WTC11 (cell line): ENCODE measurements at regions of chr2 and their contacts with region 1.

Region 1: DNA sequence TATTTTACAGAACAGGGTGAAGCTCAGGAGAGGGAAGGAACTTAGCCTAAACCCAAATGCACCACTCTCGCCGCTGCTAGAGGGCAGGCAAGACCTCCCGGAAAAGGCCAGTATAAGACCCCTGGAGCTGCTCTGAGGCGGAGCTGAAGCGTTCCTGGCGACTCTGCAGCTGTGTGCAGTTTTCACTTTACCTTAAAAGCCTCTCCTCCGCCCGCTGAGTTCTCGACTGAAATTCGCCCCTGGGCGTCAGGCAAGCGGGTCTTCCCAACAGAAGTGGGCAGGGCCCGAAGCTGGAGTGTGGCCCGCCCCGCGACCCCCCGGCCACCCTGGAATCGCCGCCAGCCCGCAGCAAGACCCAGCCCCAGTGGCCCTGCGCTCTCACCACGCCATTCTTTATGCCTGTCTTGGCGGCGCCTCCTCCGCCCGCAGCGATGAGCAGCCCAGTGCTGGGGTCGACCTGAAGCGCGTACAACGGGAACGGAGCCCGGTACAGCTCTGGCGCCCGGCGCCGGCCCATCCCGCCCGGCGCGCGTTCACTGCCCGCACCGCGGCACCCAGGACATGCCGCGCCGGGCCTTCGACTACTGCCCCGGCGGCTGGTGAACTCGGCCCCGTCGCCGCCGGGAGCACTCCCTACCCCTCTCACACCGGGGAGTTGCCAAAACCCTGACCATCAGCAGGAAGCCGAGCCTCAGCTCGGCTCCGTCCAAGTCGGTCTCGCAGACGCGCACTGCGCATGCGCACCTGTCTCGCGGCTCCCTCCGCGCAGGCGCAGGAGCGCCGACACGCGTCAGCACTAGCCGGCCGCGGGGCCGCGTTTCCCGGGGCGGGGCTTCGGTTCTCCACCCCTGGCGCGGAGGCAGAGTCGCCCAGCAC is at the start of gene PREB:
- DNase-seq: peak; percentile 99
- ATAC-seq: peak; percentile 93
- H3K4me3 Mint-ChIP-seq: peak within 1 kb of the TSS; percentile 90
- H3K27ac Mint-ChIP-seq: peak within 1 kb of the TSS; percentile 98
- H3K4me1 Mint-ChIP-seq: peaks cover 14% of the 10 kb centered on the region
- H3K27me3 Mint-ChIP-seq: peaks cover 5% of the 10 kb centered on the region
- CTCF ChIP-seq: no peak
- total RNA-seq, gene PREB: 56.7 to 69.2 TPM (median 56.7 TPM) in 3 replicates

Region 2: DNA sequence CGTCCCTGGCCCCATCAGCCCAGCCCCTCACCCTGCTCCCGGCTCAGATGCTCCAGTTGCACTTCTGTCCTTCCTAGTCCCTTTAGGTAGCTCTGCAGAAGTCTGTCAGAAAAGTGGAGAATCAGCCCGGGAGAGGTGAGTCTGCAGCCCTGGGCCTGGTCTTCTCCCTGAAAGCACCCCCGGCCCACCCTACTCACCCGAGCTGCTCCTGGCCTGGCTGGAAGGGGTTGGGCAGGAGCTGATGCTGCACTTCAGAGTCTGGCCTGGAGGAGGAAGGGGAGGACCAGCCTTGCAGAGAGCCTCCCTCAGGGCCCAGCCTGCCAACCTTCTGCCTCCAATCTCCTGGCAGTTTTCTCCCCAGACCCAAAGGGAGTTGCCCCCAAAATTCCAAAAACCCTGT is 31.8 kb before region 1 on chr2:
- CTCF ChIA-PET with region 1: interaction called, 19 read pairs
- POLR2A ChIA-PET with region 1: interaction called, 3 read pairs
- DNase-seq: no peak
- ATAC-seq: no peak; the same call in 1 of the 2 replicates
- H3K4me3 Mint-ChIP-seq: no peak overlapping the region
- H3K27ac Mint-ChIP-seq: no peak overlapping the region
- H3K4me1 Mint-ChIP-seq: no peaks in the 10 kb centered on the region
- H3K27me3 Mint-ChIP-seq: 0 out of 2 replicates have a peak, but pooled peaks cover 5% of the 10 kb centered on the region
- CTCF ChIP-seq: no peak

Region 3: DNA sequence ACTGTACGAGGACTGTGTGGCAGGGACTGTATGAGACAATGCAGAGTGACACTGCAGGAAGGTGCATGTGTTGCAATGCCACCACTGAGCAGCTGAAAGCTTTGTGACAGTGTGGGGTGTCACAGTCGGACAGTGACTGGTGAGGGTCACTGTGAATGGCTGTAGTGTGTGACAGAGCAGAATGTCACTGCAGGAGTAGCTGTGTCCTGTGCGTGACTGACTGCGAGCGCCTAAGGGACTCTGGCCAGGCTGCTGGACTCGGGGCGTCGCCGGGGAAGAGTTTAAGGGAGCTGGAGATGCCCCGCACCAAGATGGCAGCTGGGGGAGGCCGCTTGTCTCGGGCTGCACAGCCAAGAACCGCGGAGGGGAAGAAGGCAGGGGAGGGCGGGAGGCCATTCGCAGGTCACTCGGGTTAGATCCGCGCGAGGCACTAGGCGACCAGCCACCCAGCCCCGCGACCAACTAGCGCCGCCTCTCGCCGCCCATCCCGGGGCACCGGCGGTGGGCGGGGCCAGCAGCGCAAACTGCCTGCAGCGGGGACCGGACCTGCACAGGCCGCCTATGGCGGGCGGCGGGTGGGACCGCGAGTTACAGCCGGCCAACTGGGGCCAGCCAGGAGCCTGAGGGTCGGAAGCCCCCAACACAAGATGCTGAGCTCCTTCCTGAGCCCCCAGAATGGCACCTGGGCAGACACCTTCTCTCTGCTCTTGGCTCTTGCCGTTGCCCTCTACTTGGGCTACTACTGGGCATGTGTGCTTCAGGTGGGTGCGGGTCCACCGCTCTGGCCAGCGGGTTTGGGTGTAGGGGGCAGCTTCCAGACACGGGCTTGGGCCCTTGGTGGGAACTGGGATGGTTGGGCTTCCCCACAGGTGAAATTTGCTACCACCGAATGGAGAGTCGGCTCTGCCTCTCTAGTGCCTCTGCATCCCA is 10.6 kb before region 1 on chr2 and contains the start of gene ABHD1:
- CTCF ChIA-PET with region 1: interaction called, 33 read pairs
- POLR2A ChIA-PET with region 1: interaction called, 9 read pairs
- DNase-seq: peak; percentile 71
- ATAC-seq: peak; percentile 84
- H3K4me3 Mint-ChIP-seq: peak within 1 kb of the TSS; percentile 84
- H3K27ac Mint-ChIP-seq: no peak within 1 kb of the TSS
- H3K4me1 Mint-ChIP-seq: peaks cover 16% of the 10 kb centered on the region; the same call in 1 of the 2 replicates
- H3K27me3 Mint-ChIP-seq: peaks cover 61% of the 10 kb centered on the region
- CTCF ChIP-seq: no peak
- total RNA-seq, gene ABHD1: 0.31 to 0.62 TPM (median 0.53 TPM) in 3 replicates

Region 4: DNA sequence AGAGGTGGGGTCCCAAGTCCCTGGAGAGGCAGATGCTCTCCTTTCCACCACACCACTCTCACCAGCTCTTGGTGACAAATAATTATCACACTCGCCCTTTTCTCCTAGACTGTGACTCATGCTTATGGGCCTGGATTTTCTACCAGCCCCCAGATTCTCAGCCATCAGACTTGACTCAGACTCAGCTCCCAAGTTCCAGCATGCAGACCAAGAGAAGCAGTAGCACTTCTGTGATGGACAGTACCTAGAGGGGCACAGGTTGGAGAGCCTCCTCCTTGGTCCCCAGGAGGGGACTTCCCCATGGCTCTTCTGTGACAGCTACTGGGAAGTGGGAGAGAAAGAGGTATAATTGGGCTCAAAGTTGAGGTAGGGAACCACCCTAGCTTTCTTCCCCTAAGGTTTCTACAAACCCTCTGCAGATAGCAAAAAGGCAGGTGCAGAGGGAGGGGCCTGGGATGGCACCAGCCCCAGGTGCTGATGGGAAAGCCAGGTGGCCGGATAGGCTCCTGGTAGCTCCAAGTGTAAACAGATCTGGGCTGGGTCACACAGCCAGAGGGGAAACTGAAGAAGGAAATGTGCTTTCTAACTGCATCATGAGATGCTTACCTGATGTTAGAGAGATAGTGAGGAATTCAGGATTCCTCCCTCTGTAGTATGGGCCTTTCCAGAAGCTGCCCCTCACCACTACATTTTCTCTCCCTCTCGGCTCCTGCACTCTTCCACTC is 18.8 kb after region 1 on chr2:
- CTCF ChIA-PET with region 1: interaction called, 15 read pairs
- POLR2A ChIA-PET with region 1: no interaction called
- DNase-seq: no peak
- ATAC-seq: no peak
- H3K4me3 Mint-ChIP-seq: no peak overlapping the region
- H3K27ac Mint-ChIP-seq: no peak overlapping the region
- H3K4me1 Mint-ChIP-seq: no peaks in the 10 kb centered on the region
- H3K27me3 Mint-ChIP-seq: no peaks in the 10 kb centered on the region
- CTCF ChIP-seq: no peak